AG04449 (cell line): ENCODE measurements at regions of chr3 and their contacts with region 1.

Region 1: GRCh38 chr3:184154885-184155643 is at the start of gene DVL3:
- DNase-seq: no peak
- H3K4me3 ChIP-seq: peak within 1 kb of the TSS; percentile 94
- CTCF ChIP-seq: no peak

Region 2: GRCh38 chr3:183427876-183428446 is 727.1 kb before region 1 on chr3:
- CTCF ChIA-PET with region 1: no interaction called
- POLR2A ChIA-PET with region 1: no interaction called
- DNase-seq: no peak
- H3K4me3 ChIP-seq: peak overlapping the region; percentile 55
- CTCF ChIP-seq: no peak

Region 3: GRCh38 chr3:183966251-183966801 is 188.7 kb before region 1 on chr3:
- CTCF ChIA-PET with region 1: no interaction called
- POLR2A ChIA-PET with region 1: no interaction called
- DNase-seq: no peak
- H3K4me3 ChIP-seq: no peak overlapping the region
- CTCF ChIP-seq: no peak

Region 4: GRCh38 chr3:184168363-184169120 is 13.5 kb after region 1 on chr3:
- CTCF ChIA-PET with region 1: interaction called, 6 read pairs
- POLR2A ChIA-PET with region 1: interaction called, 11 read pairs
- DNase-seq: no peak
- H3K4me3 ChIP-seq: no peak overlapping the region
- CTCF ChIP-seq: no peak

Region 5: GRCh38 chr3:184218814-184219213 is 63.8 kb after region 1 on chr3:
- CTCF ChIA-PET with region 1: no interaction called
- POLR2A ChIA-PET with region 1: no interaction called
- DNase-seq: no peak
- H3K4me3 ChIP-seq: no peak overlapping the region
- CTCF ChIP-seq: no peak